Panc1 (cell line): ENCODE measurements at regions of chr5 and their contacts with region 1.

Region 1: GRCh38 chr5:42970636-42971559 is 69.2 kb downstream of the ANXA2R start:
- DNase-seq: no peak
- ATAC-seq: peak; percentile 62; the same call in 1 of the 2 replicates
- H3K4me3 ChIP-seq: no peak overlapping the region
- H3K27ac ChIP-seq: no peak overlapping the region
- H3K4me1 ChIP-seq: no peaks in the 10 kb centered on the region
- H3K27me3 ChIP-seq: no peaks in the 10 kb centered on the region
- CTCF ChIP-seq: peak; percentile 46

Region 2: DNA sequence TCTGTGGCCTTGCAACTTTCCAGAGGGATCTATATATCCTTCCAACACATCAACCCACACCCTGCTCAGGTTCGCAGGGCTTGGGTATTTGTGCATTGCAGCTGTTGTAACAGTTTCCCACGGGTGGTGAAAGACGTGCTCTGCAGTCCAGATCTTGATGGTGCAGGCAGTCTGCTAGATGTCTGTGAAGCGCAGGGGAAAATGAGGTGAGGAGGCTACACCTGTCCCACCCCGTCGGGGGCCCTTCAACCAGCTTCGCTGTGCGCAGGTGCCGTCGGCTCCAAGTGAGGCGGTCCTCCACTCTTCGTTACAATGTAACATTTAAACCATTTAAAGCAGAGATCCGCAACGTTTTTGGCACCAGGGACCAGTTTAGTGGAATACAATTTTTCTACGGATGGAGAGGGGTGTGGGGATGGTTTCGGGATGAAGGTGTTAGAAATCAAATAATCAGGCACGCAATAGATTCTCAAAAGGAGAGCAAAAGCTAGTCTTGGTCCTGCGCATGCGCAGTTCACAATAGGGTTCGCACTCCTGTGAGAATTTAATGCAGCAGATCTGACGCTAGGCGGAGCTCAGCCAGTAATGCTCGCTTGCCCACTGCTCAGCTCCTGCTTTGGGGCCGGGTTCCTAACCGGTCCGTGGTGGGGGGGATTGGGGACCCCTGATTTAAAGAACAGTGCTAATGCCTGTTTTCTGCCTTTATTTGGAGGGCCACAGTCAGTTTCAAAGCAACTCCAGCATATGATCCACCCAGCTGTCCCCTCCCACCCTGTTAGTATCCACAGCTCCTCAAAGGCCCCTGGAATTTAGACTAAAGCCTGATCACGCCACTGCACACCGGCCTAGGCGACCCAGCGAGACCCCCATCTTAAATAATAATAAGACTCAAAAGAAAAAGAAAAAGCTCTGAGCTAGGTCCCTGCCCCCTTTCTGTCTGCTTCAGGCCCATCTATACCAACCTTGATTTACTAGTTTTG is 62.1 kb before region 1 on chr5:
- CTCF ChIA-PET with region 1: interaction called, 13 read pairs
- POLR2A ChIA-PET with region 1: no interaction called
- in situ Hi-C with region 1: no loop called
- intact Hi-C with region 1: no loop called
- DNase-seq: peak; percentile 89
- ATAC-seq: peak; percentile 93
- H3K4me3 ChIP-seq: peak overlapping the region; percentile 56 to 79
- H3K27ac ChIP-seq: peak overlapping the region; percentile 75
- H3K4me1 ChIP-seq: peaks cover 8% of the 10 kb centered on the region; the same call in 1 of the 2 replicates
- H3K27me3 ChIP-seq: peaks cover 11% of the 10 kb centered on the region
- CTCF ChIP-seq: peak; percentile 94